B cell (primary cell): ENCODE measurements at regions of chr12 and their contacts with region 1.

Region 1: DNA sequence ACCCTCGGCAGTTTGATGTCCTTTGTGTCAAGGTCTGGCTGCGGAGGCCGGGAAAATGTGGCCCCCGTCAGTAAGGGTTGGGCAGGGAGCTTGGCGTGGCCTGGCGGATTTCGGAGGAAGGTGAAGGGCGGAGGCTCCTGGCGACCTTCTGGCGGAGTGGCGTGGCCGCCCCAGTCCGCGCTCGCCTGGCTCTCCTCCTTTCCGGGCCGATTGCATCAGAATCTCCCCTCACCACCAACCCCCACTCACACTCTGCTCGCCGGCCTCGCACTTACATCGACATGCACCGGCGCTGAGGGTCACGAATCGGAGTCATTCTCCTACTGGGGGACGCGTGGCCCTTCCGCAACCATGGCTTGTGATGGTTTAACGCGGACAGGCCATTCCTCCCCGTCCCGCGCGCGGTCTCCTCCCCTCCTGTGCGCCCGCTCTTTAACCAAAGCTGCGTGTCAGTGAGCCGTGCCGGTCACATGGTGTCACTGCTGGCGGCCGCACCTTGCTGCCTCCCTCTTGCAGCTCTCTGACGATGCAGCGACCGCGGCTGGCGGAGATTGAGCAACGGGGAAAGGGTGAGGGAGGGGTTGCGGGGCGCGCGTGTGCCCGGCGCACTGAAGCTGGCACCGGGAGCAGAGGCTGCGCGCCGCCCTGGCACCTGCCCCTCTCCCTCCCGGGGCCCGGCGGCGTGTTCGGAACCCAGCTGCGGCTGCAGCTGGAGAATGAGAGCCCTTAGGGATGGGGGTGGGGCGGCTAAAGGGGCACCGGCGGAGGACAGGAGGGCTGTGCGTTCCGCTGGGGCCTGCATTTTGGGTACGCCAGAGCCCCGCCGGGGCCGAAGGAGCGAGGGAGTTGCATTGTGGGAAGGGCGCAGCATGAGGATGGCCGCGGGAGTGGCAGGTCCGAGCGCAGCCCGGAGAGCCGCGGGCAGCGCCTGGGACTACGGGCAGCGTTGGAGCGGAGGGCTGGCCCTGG is at the start of gene SLC38A1:
- DNase-seq: peak; percentile 93
- ATAC-seq: peak; percentile 69
- H3K4me3 ChIP-seq: peak within 1 kb of the TSS; percentile 70 to 98 (median 96)
- H3K4me3 Mint-ChIP-seq: no peak within 1 kb of the TSS
- H3K27ac ChIP-seq: peak within 1 kb of the TSS; percentile 91 to 94
- H3K27ac Mint-ChIP-seq: no peak within 1 kb of the TSS
- H3K4me1 ChIP-seq: peaks cover 38 to 41% of the 10 kb centered on the region in 2 donors
- H3K4me1 Mint-ChIP-seq: peaks cover 30% of the 10 kb centered on the region
- H3K27me3 ChIP-seq: no peaks in the 10 kb centered on the region
- H3K27me3 Mint-ChIP-seq: no peaks in the 10 kb centered on the region
- CTCF ChIP-seq: no peak
- total RNA-seq, gene SLC38A1: 205 and 219 TPM in 2 replicates

Region 2: GRCh38 chr12:46209914-46210872 is 58.7 kb before region 1 on chr12:
- CTCF ChIA-PET with region 1: interaction called, 8 read pairs
- POLR2A ChIA-PET with region 1: interaction called, 14 read pairs
- intact Hi-C with region 1: loop called (anchors 1 kb)
- DNase-seq: peak; percentile 77
- ATAC-seq: peak; percentile 72
- H3K4me3 ChIP-seq: peak overlapping the region in 1 of 5 experiments; percentile 9
- H3K4me3 Mint-ChIP-seq: peak overlapping the region; percentile 68
- H3K27ac ChIP-seq: peak overlapping the region; percentile 84 to 96
- H3K27ac Mint-ChIP-seq: peak overlapping the region; percentile 92
- H3K4me1 ChIP-seq: peaks cover 74 to 88% of the 10 kb centered on the region in 2 donors
- H3K4me1 Mint-ChIP-seq: peaks cover 89% of the 10 kb centered on the region
- H3K27me3 ChIP-seq: no peaks in the 10 kb centered on the region
- H3K27me3 Mint-ChIP-seq: no peaks in the 10 kb centered on the region
- CTCF ChIP-seq: no peak

Region 3: GRCh38 chr12:46217541-46218321 is 51.1 kb before region 1 on chr12:
- CTCF ChIA-PET with region 1: interaction called, 12 read pairs
- POLR2A ChIA-PET with region 1: interaction called, 40 read pairs
- intact Hi-C with region 1: loop called (anchors 2 kb)
- DNase-seq: peak; percentile 87
- ATAC-seq: peak; percentile 70
- H3K4me3 ChIP-seq: peak overlapping the region in 4 of 5 experiments; percentile 16 to 59 (median 32)
- H3K4me3 Mint-ChIP-seq: peak overlapping the region; percentile 69
- H3K27ac ChIP-seq: peak overlapping the region; percentile 83 to 96
- H3K27ac Mint-ChIP-seq: peak overlapping the region; percentile 86
- H3K4me1 ChIP-seq: peaks cover 94 to 97% of the 10 kb centered on the region in 2 donors
- H3K4me1 Mint-ChIP-seq: peaks cover 94% of the 10 kb centered on the region
- H3K27me3 ChIP-seq: no peaks in the 10 kb centered on the region
- H3K27me3 Mint-ChIP-seq: no peaks in the 10 kb centered on the region
- CTCF ChIP-seq: no peak

Region 4: DNA sequence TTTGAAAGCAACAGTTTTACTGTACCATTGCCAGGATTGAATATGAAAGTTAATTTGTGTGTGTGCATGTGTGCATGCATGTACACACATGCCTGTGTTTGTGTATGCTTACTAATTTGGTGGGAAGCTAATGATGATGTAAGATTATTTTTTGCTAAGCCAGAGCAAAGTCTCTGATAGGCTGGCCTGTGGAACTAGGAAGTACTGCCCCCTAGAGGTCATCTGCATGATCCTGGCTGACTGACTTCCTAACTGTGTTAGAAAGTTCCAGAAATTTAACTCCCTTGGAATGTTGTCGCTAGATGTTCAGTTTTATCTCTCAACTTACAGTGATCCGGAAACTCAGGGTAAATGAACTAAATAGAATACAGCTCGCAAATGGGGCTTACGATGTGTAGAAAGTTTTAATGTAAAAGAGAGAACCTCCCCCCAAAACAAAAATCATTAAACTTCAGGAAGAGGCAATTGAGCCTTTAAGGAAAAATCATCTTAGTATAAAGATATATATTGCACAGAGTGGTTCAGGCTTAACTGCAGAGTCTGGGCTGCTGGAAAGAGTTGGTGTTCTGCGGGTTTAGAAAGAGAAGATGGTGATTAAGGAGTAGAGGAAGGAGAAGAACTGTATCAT is 34.3 kb after region 1 on chr12:
- CTCF ChIA-PET with region 1: interaction called, 28 read pairs
- POLR2A ChIA-PET with region 1: interaction called, 4 read pairs
- intact Hi-C with region 1: loop called (anchors 1 kb)
- DNase-seq: peak; percentile 73
- ATAC-seq: peak; percentile 71
- H3K4me3 ChIP-seq: no peak overlapping the region
- H3K4me3 Mint-ChIP-seq: no peak overlapping the region
- H3K27ac ChIP-seq: no peak overlapping the region
- H3K27ac Mint-ChIP-seq: peak overlapping the region; percentile 28
- H3K4me1 ChIP-seq: peaks cover 19 to 20% of the 10 kb centered on the region in 2 donors
- H3K4me1 Mint-ChIP-seq: peaks cover 29% of the 10 kb centered on the region
- H3K27me3 ChIP-seq: no peaks in the 10 kb centered on the region
- H3K27me3 Mint-ChIP-seq: no peaks in the 10 kb centered on the region
- CTCF ChIP-seq: peak; percentile 72

Region 5: DNA sequence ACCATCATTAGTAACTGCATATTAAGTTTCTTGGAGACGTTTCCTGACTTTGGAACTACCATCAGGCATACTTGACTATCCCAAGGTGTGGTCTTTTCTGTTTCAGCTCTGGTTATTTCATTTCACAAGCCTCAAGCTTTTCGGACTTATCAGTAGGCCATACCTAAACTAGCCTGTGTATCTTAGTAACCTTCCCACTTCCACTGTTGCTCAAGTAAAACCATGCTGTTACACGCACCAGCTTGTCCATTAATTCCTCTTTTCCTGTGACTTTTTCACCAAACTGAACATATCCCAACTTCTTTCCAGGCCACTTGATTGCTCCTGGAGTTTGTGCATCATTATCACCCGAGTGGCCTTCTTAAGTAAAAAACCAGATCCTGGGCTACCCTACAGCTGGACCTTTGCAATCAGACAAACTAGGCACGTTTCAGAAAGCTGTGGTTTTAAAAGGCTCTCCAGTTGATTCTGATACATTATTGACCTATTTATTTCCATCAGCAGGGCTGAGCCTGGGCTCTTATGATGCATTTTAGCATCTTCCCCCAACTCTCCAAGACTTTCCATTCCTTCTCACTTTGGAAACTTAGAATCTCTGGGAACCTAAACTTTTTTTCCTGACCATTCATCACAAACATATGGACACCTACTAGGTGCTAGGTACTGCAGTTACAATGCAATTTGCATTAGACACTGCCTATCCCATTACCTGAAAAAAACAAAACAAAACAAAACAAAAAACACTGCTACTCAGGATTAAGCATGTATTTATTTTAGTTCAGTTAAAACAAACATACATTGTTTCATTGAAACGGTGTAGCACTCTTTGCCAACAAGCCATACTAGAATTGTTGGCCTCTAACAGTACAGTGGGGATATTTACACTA is 88.8 kb after region 1 on chr12:
- CTCF ChIA-PET with region 1: no interaction called
- POLR2A ChIA-PET with region 1: no interaction called
- intact Hi-C with region 1: no loop called
- DNase-seq: no peak
- ATAC-seq: no peak
- H3K4me3 ChIP-seq: no peak overlapping the region
- H3K4me3 Mint-ChIP-seq: no peak overlapping the region
- H3K27ac ChIP-seq: no peak overlapping the region
- H3K27ac Mint-ChIP-seq: no peak overlapping the region
- H3K4me1 ChIP-seq: peaks cover 12 to 20% of the 10 kb centered on the region in 2 donors
- H3K4me1 Mint-ChIP-seq: peaks cover 29% of the 10 kb centered on the region
- H3K27me3 ChIP-seq: no peaks in the 10 kb centered on the region
- H3K27me3 Mint-ChIP-seq: no peaks in the 10 kb centered on the region
- CTCF ChIP-seq: no peak

Region 6: DNA sequence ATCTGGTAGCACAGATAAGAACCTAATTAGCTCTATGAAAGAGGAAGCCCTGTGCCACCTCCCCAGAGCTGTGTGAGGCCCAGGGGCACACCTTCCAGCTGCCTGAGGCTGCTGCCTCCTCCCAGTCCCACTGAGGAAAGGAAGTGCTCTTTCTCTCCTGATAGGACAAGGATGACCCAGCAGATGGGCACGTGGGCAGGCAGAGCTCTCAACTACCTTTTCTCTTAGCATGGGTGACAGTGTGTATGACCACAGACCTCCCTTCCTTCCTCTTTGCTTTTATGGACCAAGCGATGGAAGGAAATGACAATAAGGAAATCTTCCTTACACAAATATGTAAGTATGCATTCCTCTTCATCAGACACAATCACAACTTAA is 938.5 kb after region 1 on chr12:
- CTCF ChIA-PET with region 1: no interaction called
- POLR2A ChIA-PET with region 1: no interaction called
- intact Hi-C with region 1: no loop called
- DNase-seq: peak; percentile 87
- ATAC-seq: peak; percentile 85
- H3K4me3 ChIP-seq: peak overlapping the region in 2 of 5 experiments; percentile 7 to 31
- H3K4me3 Mint-ChIP-seq: peak overlapping the region; percentile 75
- H3K27ac ChIP-seq: peak overlapping the region; percentile 78 to 84
- H3K27ac Mint-ChIP-seq: peak overlapping the region; percentile 94
- H3K4me1 ChIP-seq: peaks cover 71 to 80% of the 10 kb centered on the region in 2 donors
- H3K4me1 Mint-ChIP-seq: peaks cover 77% of the 10 kb centered on the region
- H3K27me3 ChIP-seq: no peaks in the 10 kb centered on the region
- H3K27me3 Mint-ChIP-seq: no peaks in the 10 kb centered on the region
- CTCF ChIP-seq: no peak